Left colon (tissue), 2 donors: ENCODE measurements at regions of chr15 and their contacts with region 1.

Region 1: DNA sequence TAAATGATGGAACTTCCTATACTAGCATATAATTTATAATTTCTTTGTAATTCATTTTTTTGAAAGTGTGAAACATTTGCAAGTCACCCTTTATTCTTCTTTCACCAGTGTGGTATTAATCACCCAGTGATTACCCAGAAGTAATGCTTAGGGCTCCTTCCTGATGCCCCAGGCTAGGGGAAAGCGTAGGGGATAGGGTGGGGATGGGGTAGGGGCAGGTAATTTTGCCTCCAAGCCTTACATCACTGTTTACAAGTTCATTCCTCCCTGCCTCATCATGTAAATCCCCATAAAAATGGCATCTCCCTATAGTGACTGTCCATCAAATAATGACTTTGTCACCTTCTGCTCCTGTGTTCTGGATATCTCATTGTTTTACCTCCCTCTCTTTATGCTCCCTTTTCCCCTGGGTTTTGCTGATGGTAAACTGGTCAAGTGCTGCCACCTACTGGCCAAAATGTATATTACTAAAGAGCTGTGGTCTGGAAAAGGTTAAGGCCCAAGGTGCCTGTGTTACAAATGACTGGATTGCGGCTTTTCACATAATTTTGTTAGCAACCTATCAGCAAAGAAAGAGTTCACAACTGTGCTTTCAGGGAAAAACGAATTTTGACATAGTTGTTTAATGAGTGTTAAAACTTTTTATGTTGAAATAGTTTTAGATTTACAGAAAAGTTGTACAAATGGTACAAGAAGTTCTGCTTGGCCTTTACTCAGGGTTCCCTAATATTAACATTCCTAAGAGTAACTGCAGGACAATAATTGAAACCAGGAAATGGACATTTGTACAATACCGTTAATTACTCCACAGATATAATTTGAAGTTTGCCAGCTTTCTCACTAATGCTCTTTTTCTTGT is 54.7 kb downstream of the ONECUT1 start:
- DNase-seq: peak in 1 of 2 donors; percentile 58
- ATAC-seq: peak; percentile 84

Region 2: DNA sequence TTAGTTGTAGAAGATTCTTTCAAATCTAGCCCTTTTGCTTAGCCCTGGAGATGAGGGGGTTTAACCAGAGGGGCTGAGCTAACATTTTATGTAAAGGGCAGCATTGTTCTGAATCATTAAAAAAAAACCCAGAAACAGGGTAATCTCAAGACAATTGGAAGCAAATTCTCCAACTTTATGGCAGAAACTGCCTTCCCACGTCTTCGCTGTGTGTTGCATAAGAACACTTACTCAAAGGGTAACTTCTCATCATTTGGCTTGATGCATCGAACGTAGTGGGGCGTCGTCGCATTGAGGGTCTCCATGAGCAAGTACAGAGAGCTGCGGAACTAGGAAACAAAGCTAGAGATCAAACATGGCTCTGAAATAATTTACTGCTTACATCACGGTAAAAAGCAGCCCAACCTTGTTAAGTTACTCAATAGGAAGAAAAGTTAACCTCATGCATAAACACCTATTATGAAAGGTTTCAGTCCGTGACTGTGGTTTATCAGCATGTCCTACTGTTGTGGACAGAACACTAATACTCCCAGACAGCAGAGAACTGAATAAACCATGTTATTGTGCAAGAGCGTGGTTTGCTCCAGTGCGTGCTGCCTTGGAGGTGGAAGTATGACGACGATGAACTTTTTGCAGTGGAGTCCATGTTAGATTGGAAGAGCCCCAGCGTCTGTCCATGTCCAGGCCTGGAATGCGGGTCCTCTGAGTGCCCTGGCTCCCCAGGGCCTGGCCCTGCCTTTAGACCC is 488.6 kb before region 1 on chr15:
- intact Hi-C with region 1: loop called in 1 of 2 experiments (anchors 5 kb)
- DNase-seq: no peak
- ATAC-seq: no peak

Region 3: DNA sequence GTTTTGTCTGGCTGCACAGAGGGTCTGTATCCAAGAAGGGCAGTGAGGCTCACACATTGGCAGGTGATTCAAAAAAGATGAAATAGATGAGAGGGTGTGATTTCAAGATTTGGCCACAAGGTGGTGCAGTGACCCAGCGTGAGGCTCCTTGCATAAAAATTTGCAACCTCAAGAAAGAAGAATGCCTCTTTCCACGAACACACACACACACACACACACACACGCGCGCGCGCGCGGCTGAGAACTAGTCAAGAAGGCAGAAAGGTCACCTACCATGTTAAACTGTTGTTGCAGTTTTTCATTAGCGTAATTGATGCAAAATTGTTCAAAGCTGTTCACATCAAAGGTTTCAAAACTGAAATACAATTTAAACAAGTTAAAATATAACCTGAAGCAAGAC is 479.1 kb before region 1 on chr15:
- intact Hi-C with region 1: loop called in 1 of 2 experiments (anchors 5 kb)
- DNase-seq: peak; percentile 45 to 76
- ATAC-seq: peak; percentile 65